Activated CD8-positive, alpha-beta T cell treated with anti-CD3 and anti-CD28 coated beads, Interleukin-2, amount 10 ng/mL, durations not matched to agents 7 days and 5 days (primary cell): ENCODE measurements at regions of chr22 and their contacts with region 1.

Region 1: DNA sequence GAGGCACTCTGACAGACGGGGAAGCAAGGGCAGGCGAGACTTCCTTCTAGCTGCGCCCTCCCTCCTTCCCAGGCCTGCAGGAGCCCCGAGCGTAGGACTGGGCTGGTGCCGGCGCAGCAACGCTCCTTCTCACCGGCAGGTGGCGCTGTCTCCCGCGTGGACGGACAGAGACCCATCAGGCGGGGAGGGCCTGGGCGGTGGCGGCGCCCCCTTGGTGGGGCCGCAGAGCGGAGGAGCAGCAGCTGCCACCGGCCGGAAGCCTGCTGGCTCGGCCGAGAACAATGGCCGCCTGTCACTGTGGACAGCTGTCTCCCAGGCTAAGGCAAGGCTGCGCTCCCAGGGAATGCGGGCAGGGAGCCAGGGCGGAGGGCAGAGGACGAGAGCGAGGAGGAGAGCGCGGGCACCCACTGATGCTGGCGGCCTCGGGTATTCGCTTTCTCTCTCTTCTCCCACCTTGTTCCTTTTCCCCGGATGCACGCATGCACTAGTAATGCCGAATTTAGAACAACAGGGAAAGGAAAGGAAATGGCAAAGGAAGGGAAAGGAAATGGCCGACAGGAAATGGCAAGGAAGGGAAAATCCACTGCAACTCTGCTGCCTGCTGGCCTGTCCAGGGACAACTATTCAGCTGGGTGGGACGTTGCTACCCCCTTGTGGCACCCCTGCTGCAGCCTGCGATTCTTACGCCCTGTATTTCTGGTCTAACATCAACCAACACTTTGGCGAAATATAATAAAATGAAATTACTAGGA is 14.4 kb downstream of the PPM1F start:
- DNase-seq: peak; percentile 93
- ATAC-seq: peak; percentile 99
- H3K4me3 Mint-ChIP-seq: peak overlapping the region; percentile 73
- H3K27ac Mint-ChIP-seq: peak overlapping the region; percentile 84
- H3K4me1 Mint-ChIP-seq: peaks cover 59% of the 10 kb centered on the region
- H3K27me3 Mint-ChIP-seq: no peaks in the 10 kb centered on the region

Region 2: DNA sequence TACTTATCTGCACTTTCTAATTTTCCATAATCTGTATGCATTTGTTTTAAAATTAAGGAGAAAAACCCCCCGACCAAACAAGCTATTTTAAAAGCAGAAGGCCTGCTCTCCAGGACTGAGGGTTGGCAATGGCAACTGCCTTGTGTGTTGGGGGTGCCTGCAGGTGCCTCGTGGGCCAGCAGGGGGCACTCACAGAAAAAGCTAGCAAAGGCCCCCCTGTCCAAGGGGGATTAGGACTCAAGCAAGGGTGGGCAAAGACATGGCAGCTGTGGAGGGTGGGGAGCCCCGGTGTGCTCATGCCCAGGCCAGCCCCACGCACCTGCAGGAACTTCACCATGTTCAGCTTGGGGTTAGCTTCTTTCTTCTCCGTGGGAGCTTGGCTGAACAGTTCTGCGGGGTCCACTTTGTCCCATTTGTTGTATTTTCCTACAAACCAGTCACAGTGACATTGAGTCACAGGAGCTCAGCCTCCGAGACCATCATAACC is 34.1 kb after region 1 on chr22:
- CTCF ChIA-PET with region 1: interaction called, 13 read pairs
- POLR2A ChIA-PET with region 1: no interaction called
- DNase-seq: peak; percentile 68
- ATAC-seq: peak; percentile 80
- H3K4me3 Mint-ChIP-seq: no peak overlapping the region
- H3K27ac Mint-ChIP-seq: no peak overlapping the region
- H3K4me1 Mint-ChIP-seq: no peaks in the 10 kb centered on the region
- H3K27me3 Mint-ChIP-seq: no peaks in the 10 kb centered on the region